ENCODE measurements at regions of chr19 and their contacts with region 1.

Region 1: GRCh38 chr19:55216461-55217198 is 7.3 kb upstream of the PTPRH start:
- DNase-seq: peak; percentile 88 to 99 (median 92)
- ATAC-seq: peak; percentile 83
- H3K4me3 ChIP-seq: peak overlapping the region; percentile 57
- H3K27ac ChIP-seq: peak overlapping the region; percentile 93
- H3K4me1 ChIP-seq: peaks cover 18 to 20% of the 10 kb centered on the region in 2 experiments; a peak in 4 of 5 replicates
- H3K27me3 ChIP-seq: no peaks in the 10 kb centered on the region
- CTCF ChIP-seq: no peak
- EP300 ChIP-seq: peak; percentile 94
- POLR2A ChIP-seq: peak; percentile 86
- RAD21 ChIP-seq: peak in 1 of 2 experiments; percentile 40; a peak in 2 of 4 replicates

Region 2: GRCh38 chr19:55198651-55199050 is 18.0 kb before region 1 on chr19:
- CTCF ChIA-PET with region 1: no interaction called
- POLR2A ChIA-PET with region 1: no interaction called
- in situ Hi-C with region 1: no loop called
- intact Hi-C with region 1: no loop called
- DNase-seq: no peak
- ATAC-seq: no peak
- H3K4me3 ChIP-seq: no peak overlapping the region
- H3K27ac ChIP-seq: no peak overlapping the region
- H3K4me1 ChIP-seq: no peaks in the 10 kb centered on the region
- H3K27me3 ChIP-seq: no peaks in the 10 kb centered on the region
- CTCF ChIP-seq: no peak
- EP300 ChIP-seq: no peak
- POLR2A ChIP-seq: no peak
- RAD21 ChIP-seq: no peak

Region 3: DNA sequence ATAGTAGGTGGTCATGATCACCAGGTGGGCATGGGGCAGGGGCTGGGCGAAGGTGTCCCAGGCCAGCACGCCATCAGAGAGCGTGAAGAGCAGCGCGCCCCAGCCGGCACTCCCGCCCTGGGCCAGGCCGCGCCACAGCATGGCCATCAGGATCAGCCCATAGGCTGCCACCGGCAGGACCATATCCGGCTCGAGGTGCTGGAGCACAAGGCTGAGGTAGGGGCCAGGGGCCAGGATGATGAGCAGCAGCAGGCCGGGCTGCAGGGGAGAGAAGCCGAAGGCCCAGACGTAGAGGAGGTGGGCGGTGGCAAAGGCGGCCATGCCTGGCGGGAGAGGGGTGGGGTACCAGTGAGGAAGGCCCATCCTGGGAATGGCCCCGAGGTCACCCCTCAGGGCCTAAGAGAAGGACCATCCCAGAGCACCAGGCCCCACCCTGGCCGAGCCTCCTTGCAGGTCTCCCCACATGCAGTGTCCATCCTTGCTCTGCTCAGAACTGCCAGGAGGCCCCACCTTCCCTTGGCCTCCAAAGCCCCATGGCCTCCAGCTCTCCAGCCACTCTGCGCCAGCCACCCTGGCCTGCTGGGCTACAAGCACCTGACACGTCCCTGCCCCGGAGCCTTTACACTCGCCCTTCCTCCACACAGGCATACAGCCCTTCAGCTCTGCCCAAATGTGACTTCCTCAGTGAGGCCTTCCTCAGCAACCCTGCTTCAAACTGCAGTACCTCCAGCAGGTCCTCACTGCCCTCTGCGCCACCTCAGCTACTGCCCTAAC is 10.8 kb after region 1 on chr19:
- CTCF ChIA-PET with region 1: no interaction called
- POLR2A ChIA-PET with region 1: interaction called, 13 read pairs
- in situ Hi-C with region 1: no loop called
- intact Hi-C with region 1: no loop called
- DNase-seq: peak in 1 of 4 experiments; percentile 10
- ATAC-seq: peak; percentile 5; the same call in 2 of the 3 replicates
- H3K4me3 ChIP-seq: no peak overlapping the region
- H3K27ac ChIP-seq: no peak overlapping the region
- H3K4me1 ChIP-seq: peaks cover 0 to 52% of the 10 kb centered on the region in 2 experiments; a peak in 2 of 5 replicates
- H3K27me3 ChIP-seq: no peaks in the 10 kb centered on the region
- CTCF ChIP-seq: no peak
- EP300 ChIP-seq: no peak
- POLR2A ChIP-seq: no peak; the same call in 1 of the 2 replicates
- RAD21 ChIP-seq: no peak

Region 4: DNA sequence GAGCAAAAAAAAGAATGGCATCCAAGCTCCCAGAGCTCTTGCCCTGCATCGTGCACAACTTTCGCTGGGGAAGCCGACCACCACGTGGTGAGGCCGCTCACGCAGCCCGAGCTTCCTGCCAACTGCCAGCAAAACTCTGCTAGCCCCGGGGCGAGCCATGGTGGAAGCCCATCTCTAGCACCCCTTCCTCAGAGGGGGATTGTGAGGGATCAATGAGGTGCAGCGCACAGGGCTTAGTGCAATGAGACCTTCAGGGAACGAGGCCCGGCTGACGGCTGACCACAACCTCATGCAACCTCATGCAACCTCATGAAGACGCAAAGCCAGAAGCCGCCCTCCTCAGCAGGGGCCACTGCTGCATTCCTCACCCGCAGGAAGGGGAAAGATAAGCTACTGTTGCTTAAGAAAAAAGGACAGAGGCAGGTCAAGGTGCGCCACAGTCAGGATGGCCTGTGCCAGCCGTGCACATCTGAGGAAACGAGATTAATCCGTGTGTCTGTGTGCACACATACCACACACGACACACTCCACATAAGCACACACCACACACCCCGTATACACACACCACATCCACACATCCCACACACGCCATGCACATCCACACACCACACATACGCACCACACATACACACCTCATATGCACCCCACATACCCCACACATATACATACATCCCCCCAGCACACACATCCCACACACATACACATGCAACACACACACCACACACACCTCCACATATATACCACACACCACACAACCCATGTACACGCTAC is 53.7 kb after region 1 on chr19:
- CTCF ChIA-PET with region 1: no interaction called
- POLR2A ChIA-PET with region 1: no interaction called
- in situ Hi-C with region 1: no loop called
- intact Hi-C with region 1: loop called (anchors 5 kb)
- DNase-seq: peak in 2 of 4 experiments; percentile 56 to 64
- ATAC-seq: peak; percentile 94
- H3K4me3 ChIP-seq: no peak overlapping the region
- H3K27ac ChIP-seq: peak overlapping the region; percentile 23; the same call in 1 of the 3 replicates
- H3K4me1 ChIP-seq: peaks cover 10 to 20% of the 10 kb centered on the region in 2 experiments; a peak in 4 of 5 replicates
- H3K27me3 ChIP-seq: no peaks in the 10 kb centered on the region
- CTCF ChIP-seq: no peak
- EP300 ChIP-seq: peak; percentile 70
- POLR2A ChIP-seq: no peak
- RAD21 ChIP-seq: peak in 1 of 2 experiments; percentile 53; a peak in 2 of 4 replicates

Region 5: DNA sequence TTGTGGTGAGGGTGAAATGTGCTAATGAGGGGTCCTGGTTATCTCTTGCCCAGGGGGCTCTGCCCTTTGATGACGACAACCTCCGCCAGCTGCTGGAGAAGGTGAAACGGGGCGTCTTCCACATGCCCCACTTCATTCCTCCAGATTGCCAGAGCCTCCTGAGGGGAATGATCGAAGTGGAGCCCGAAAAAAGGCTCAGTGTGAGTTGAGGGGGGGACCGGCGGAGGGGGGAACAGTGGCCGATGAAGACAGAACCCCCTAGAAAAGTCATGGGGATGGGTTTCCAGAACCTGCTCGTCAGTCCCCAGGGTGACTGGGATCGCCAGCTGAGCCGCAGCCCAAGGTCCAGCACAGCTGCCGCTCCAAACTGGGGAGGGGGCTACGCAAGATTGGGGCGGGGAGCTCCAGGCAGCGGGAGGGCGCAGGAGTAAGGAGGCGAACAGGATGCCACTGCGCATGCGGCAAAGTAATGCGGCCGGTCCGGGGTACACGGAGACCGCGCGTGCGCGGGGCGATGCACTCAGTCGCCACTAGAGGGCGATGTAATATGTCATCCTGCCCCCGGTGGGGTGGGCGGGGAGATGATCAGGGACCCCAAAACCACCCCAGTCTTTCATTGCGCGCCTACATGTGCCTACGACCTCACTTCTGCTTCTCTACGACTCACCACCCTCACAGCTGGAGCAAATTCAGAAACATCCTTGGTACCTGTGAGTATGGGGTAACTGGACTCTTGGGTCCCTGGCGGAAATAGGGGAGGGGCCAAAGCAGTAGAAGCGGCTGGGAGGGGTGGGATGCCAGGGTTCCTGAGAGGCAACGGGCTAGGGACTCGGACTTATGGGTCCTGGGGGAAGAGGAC is 85.1 kb after region 1 on chr19:
- CTCF ChIA-PET with region 1: no interaction called
- POLR2A ChIA-PET with region 1: no interaction called
- in situ Hi-C with region 1: loop called (anchors 5 kb)
- intact Hi-C with region 1: no loop called
- DNase-seq: peak; percentile 94 to 99 (median 99)
- ATAC-seq: peak; percentile 83
- H3K4me3 ChIP-seq: peak overlapping the region; percentile 41
- H3K27ac ChIP-seq: peak overlapping the region; percentile 50
- H3K4me1 ChIP-seq: peaks cover 17 to 57% of the 10 kb centered on the region in 2 experiments; a peak in 4 of 5 replicates
- H3K27me3 ChIP-seq: no peaks in the 10 kb centered on the region
- CTCF ChIP-seq: peak; percentile 86 to 93 (median 90)
- EP300 ChIP-seq: no peak
- POLR2A ChIP-seq: peak; percentile 61
- RAD21 ChIP-seq: peak; percentile 43 to 67

Region 6: GRCh38 chr19:55452749-55453346 is 236.2 kb after region 1 on chr19:
- CTCF ChIA-PET with region 1: no interaction called
- POLR2A ChIA-PET with region 1: no interaction called
- in situ Hi-C with region 1: no loop called
- intact Hi-C with region 1: no loop called
- DNase-seq: peak; percentile 88 to 99 (median 94)
- ATAC-seq: peak; percentile 98
- H3K4me3 ChIP-seq: peak overlapping the region; percentile 28
- H3K27ac ChIP-seq: no peak overlapping the region
- H3K4me1 ChIP-seq: peaks cover 0 to 70% of the 10 kb centered on the region in 2 experiments
- H3K27me3 ChIP-seq: peaks cover 0 to 7% of the 10 kb centered on the region in 2 experiments; a peak in 4 of 5 replicates
- CTCF ChIP-seq: no peak
- EP300 ChIP-seq: no peak
- POLR2A ChIP-seq: no peak; the same call in 1 of the 2 replicates
- RAD21 ChIP-seq: no peak

Measured in K562 (cell line).